Caco-2 (cell line): ENCODE measurements at regions of chr10 and their contacts with region 1.

Region 1: GRCh38 chr10:95133016-95133752 is 60.9 kb upstream of the ACSM6 start:
- DNase-seq: peak; percentile 86 to 89
- H3K4me3 ChIP-seq: no peak overlapping the region
- H3K4me3 Mint-ChIP-seq: no peak overlapping the region
- H3K27ac Mint-ChIP-seq: peak overlapping the region; percentile 53
- H3K4me1 ChIP-seq: peaks cover 22% of the 10 kb centered on the region
- H3K4me1 Mint-ChIP-seq: peaks cover 22% of the 10 kb centered on the region
- H3K27me3 ChIP-seq: no peaks in the 10 kb centered on the region
- H3K27me3 Mint-ChIP-seq: no peaks in the 10 kb centered on the region
- CTCF ChIP-seq: peak; percentile 77 to 94

Region 2: DNA sequence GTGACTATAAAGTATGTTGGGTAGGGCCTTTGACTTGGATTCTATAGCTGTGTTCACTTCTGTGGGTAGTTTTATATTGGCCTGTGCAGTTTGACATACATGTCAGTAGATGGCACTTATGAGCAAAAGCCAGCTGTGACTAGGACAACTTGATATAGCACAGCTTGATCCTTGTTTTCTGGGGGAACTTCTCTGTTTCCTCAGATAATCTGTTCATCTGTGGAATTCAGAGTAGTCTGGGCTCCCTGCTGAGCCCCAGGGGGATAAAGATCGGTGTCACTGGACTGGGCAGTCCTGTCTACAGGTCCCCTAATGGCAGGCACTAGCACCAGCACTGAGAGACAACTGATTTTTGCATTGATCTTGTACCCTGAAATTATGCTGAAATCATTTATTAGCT is 169.3 kb before region 1 on chr10:
- CTCF ChIA-PET with region 1: no interaction called
- POLR2A ChIA-PET with region 1: no interaction called
- intact Hi-C with region 1: loop called (anchors 5 kb)
- DNase-seq: peak; percentile 53 to 54
- H3K4me3 ChIP-seq: no peak overlapping the region
- H3K4me3 Mint-ChIP-seq: no peak overlapping the region
- H3K27ac Mint-ChIP-seq: no peak overlapping the region
- H3K4me1 ChIP-seq: no peaks in the 10 kb centered on the region
- H3K4me1 Mint-ChIP-seq: no peaks in the 10 kb centered on the region
- H3K27me3 ChIP-seq: no peaks in the 10 kb centered on the region
- H3K27me3 Mint-ChIP-seq: no peaks in the 10 kb centered on the region
- CTCF ChIP-seq: peak; percentile 73 to 77

Region 3: GRCh38 chr10:95168694-95169093 is 35.5 kb after region 1 on chr10:
- CTCF ChIA-PET with region 1: no interaction called
- POLR2A ChIA-PET with region 1: no interaction called
- intact Hi-C with region 1: no loop called
- DNase-seq: no peak
- H3K4me3 ChIP-seq: no peak overlapping the region
- H3K4me3 Mint-ChIP-seq: no peak overlapping the region
- H3K27ac Mint-ChIP-seq: no peak overlapping the region
- H3K4me1 ChIP-seq: 0 out of 2 replicates have a peak, but pooled peaks cover 7% of the 10 kb centered on the region
- H3K4me1 Mint-ChIP-seq: no peaks in the 10 kb centered on the region
- H3K27me3 ChIP-seq: no peaks in the 10 kb centered on the region
- H3K27me3 Mint-ChIP-seq: no peaks in the 10 kb centered on the region
- CTCF ChIP-seq: no peak